OCI-LY7 (cell line): ENCODE measurements at regions of chr7 and their contacts with region 1.

Region 1: GRCh38 chr7:73522105-73522872 is at the start of gene BAZ1B:
- DNase-seq: peak; percentile 99
- H3K4me3 ChIP-seq: peak within 1 kb of the TSS; percentile 87
- H3K27ac ChIP-seq: peak within 1 kb of the TSS; percentile 76
- H3K4me1 ChIP-seq: peaks cover 69% of the 10 kb centered on the region
- CTCF ChIP-seq: no peak
- total RNA-seq, gene BAZ1B: 77.8 and 86.8 TPM in 2 replicates

Region 2: GRCh38 chr7:73533742-73534141 is 11.5 kb after region 1 on chr7:
- CTCF ChIA-PET with region 1: no interaction called
- POLR2A ChIA-PET with region 1: interaction called, 13 read pairs
- intact Hi-C with region 1: no loop called
- DNase-seq: no peak
- H3K4me3 ChIP-seq: no peak overlapping the region
- H3K27ac ChIP-seq: no peak overlapping the region
- H3K4me1 ChIP-seq: no peaks in the 10 kb centered on the region
- CTCF ChIP-seq: no peak

Region 3: DNA sequence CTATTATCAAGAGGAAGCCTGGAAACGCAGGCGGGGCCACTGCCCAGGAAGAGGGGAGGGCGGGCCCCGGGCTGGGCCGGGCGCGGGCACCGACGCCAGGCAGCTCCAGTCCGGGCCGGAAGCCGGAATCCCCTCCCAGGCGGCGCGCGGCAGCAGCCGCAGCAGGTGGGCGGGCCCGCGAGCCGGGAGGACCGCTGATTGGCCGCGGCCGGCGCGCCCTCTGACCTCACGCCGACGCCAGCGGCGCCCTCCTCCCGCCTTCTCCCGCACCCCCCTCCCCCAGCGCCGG is 34.8 kb after region 1 on chr7:
- CTCF ChIA-PET with region 1: no interaction called
- POLR2A ChIA-PET with region 1: interaction called, 8 read pairs
- intact Hi-C with region 1: loop called (anchors 1 kb)
- DNase-seq: peak; percentile 93
- H3K4me3 ChIP-seq: peak overlapping the region; percentile 91
- H3K27ac ChIP-seq: peak overlapping the region; percentile 85
- H3K4me1 ChIP-seq: peaks cover 19% of the 10 kb centered on the region
- CTCF ChIP-seq: no peak

Region 4: DNA sequence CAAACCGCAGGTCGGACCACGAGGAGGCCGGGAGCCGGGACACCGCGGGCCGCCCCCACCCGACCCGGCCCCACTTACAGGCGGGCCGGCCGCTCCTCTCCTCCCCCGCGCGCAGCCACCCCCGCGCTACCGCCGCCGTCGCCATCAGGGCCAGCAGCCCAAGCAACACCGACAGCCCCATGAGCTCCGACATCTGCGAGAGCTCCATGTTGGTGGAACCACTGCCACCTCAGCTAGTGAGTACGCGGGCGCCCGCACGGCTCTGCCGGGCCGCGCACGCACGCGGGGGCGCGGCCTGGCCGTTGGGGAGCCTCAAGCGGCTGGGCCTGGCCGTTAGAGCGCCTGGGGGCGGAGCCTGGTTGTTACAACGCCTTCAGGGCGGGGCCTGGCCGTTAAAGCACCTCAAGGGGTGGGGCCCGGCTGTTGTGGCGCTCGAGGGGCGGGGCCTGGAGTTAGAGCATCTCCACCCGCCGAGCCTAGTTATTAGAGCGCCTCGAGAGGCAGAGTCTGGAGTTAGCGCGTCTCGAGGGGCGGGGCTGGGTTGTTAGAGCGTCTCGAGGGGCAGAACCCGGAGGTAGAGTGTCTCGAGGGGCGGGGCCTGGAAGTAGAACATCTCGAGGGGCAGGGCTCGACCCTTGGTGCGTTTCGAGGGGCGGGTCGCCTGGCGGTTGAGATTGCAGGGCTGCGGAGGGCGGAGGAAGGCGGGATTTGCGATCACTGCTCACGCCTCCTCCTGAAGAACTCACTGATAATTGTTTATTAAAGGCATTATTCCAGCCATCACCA is 56.2 kb after region 1 on chr7 and contains the start of gene TBL2:
- CTCF ChIA-PET with region 1: no interaction called
- POLR2A ChIA-PET with region 1: interaction called, 6 read pairs
- intact Hi-C with region 1: loop called (anchors 1 kb)
- DNase-seq: peak; percentile 100
- H3K4me3 ChIP-seq: peak within 1 kb of the TSS; percentile 96
- H3K27ac ChIP-seq: peak within 1 kb of the TSS; percentile 82
- H3K4me1 ChIP-seq: peaks cover 26% of the 10 kb centered on the region
- CTCF ChIP-seq: 0 out of 2 replicates have a peak, but pooled peaks have one; percentile 25
- total RNA-seq, gene TBL2: 36.9 and 39.8 TPM in 2 replicates

Region 5: GRCh38 chr7:73683056-73683964 is 161.0 kb after region 1 on chr7 and contains the starts of genes BUD23 and DNAJC30:
- CTCF ChIA-PET with region 1: no interaction called
- POLR2A ChIA-PET with region 1: no interaction called
- intact Hi-C with region 1: loop called (anchors 2 kb)
- DNase-seq: peak; percentile 95
- H3K4me3 ChIP-seq: peak within 1 kb of the TSS; percentile 85
- H3K27ac ChIP-seq: peak within 1 kb of the TSS; percentile 39
- H3K4me1 ChIP-seq: peaks cover 32% of the 10 kb centered on the region
- CTCF ChIP-seq: no peak
- total RNA-seq, gene BUD23: 58.1 and 65.0 TPM in 2 replicates
- total RNA-seq, gene DNAJC30: 4.0 and 5.9 TPM in 2 replicates